H1 (cell line): ENCODE measurements at regions of chr16 and their contacts with region 1.

Region 1: DNA sequence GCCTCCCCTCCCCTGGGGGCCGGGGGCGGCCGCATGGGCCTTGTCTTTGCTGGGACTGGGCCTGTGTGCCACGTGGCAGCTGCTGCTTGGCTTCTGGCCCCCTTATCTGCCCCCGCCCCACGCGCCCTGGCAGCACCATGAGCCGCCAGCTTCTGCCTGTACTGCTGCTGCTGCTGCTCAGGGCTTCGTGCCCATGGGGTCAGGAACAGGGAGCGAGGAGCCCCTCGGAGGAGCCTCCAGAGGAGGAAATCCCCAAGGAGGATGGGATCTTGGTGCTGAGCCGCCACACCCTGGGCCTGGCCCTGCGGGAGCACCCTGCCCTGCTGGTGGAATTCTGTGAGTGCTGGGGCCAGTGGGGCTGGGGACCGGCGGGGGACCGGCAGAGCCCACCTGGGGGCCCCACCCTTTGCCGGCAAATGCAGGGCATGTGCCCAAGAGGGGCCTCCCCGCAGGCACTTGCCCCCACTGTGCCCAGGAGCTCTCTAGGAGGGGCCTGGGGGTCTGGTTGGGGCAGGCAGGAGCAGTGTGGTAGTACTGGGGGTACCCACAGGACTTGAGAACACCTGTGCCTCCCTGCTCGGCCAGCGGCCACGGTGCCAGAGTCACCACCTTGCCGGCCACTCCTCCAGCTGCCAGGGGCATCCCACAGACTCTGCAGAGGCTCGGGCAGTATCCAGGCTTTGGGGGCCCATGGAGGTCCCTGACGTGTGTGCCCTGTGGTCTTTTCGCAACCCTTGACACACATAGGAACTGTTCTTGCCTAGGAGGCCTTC is at the start of gene PDIA2:
- DNase-seq: no peak
- H3K4me3 ChIP-seq: no peak within 1 kb of the TSS
- H3K27ac ChIP-seq: no peak within 1 kb of the TSS
- H3K4me1 ChIP-seq: peaks cover 0 to 3% (median 0%) of the 10 kb centered on the region in 4 experiments; a peak in 3 of 7 replicates
- H3K27me3 ChIP-seq: peaks cover 10 to 27% (median 22%) of the 10 kb centered on the region in 4 experiments
- CTCF ChIP-seq: no peak
- EP300 ChIP-seq: no peak
- POLR2A ChIP-seq: no peak
- RAD21 ChIP-seq: no peak
- total RNA-seq, gene PDIA2: 0.34 and 1.3 TPM in 2 replicates

Region 2: GRCh38 chr16:268141-269053 is 14.8 kb before region 1 on chr16:
- CTCF ChIA-PET with region 1: interaction called, 7 read pairs
- POLR2A ChIA-PET with region 1: interaction called, 13 read pairs
- DNase-seq: no peak
- H3K4me3 ChIP-seq: no peak overlapping the region
- H3K27ac ChIP-seq: no peak overlapping the region
- H3K4me1 ChIP-seq: no peaks in the 10 kb centered on the region; a peak in 1 of 7 replicates
- H3K27me3 ChIP-seq: no peaks in the 10 kb centered on the region
- CTCF ChIP-seq: no peak
- EP300 ChIP-seq: no peak
- POLR2A ChIP-seq: no peak
- RAD21 ChIP-seq: no peak